IMR-90 (cell line): ENCODE measurements at regions of chr15 and their contacts with region 1.

Region 1: DNA sequence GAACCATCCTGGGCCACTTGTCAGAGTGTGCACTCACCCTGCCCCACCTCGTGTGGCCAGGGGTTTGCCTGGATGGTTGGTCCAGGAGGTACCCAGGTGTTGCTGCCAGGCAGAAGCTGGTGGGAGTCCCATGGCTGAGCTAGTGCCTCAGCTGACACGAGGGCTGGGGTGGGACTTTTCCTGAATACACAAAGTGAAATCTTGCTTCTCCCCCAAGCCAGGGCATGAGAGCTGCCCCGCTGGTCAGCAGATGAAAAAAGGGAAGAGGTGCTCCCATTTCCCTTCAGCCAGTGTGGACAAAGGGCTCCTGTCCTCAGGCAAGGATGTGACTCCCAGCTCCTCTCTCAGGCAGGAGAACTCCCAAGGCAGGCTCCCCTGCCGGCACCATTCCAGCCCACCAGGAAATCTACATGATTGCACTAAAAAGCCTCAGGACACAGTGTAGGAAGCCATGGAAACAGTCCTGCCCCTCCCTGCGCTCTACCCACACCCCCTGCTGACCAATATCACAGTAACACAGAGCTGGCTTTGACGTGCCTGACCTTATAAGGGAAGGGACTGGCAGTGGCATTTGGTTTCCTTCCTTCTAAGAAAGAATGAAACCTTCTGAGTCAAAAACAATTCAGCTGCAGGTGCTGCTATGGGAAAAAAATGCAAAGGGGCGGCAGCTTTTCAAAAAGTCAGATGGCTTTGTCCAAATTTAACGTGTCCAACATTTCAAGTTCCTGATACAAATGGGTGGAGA is 33.9 kb downstream of the MYO5C start:
- DNase-seq: peak; percentile 77
- ATAC-seq: peak; percentile 95
- H3K4me3 ChIP-seq: no peak overlapping the region
- H3K27ac ChIP-seq: peak overlapping the region; percentile 14; the same call in 1 of the 2 replicates
- H3K4me1 ChIP-seq: peaks cover 6% of the 10 kb centered on the region; the same call in 1 of the 2 replicates
- H3K27me3 ChIP-seq: peaks cover 10% of the 10 kb centered on the region
- CTCF ChIP-seq: no peak
- POLR2A ChIP-seq: no peak
- RAD21 ChIP-seq: 0 out of 2 replicates have a peak, but pooled peaks have one; percentile 13

Region 2: DNA sequence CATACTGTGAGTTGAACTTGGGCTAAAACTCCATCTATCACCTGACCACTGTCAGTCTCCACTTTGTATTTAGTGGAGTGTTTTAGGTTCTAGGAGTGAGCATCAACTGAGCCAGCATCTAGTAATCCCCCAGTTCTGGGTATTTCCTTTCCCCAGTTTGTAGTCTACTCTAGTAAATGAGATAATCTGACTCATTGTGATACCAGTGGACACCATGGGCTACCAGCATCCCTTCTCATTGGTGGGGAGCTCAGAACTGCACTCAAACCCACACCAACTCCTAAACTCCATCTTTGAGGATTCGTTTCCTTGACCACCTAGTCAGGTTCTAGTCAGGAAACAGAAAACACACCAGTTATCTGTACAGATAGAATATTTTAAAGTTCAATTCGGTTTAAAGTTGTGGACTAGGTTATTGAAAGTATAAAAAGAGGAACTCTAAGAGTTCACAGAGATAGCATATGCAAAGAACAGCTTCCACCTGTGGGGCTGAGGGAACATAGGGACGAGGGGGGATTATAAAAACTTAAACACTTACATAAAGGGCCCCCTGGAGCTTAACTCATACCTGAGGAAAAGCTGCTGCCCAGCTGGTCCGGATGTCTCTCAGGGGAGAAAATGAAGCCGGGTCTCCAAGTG is 326.1 kb before region 1 on chr15:
- CTCF ChIA-PET with region 1: no interaction called
- POLR2A ChIA-PET with region 1: no interaction called
- dilution Hi-C with region 1: no loop called
- in situ Hi-C with region 1: no loop called
- intact Hi-C with region 1: no loop called
- DNase-seq: peak; percentile 4
- ATAC-seq: no peak
- H3K4me3 ChIP-seq: no peak overlapping the region
- H3K27ac ChIP-seq: no peak overlapping the region
- H3K4me1 ChIP-seq: no peaks in the 10 kb centered on the region
- H3K27me3 ChIP-seq: no peaks in the 10 kb centered on the region
- CTCF ChIP-seq: no peak
- POLR2A ChIP-seq: no peak
- RAD21 ChIP-seq: no peak

Region 3: DNA sequence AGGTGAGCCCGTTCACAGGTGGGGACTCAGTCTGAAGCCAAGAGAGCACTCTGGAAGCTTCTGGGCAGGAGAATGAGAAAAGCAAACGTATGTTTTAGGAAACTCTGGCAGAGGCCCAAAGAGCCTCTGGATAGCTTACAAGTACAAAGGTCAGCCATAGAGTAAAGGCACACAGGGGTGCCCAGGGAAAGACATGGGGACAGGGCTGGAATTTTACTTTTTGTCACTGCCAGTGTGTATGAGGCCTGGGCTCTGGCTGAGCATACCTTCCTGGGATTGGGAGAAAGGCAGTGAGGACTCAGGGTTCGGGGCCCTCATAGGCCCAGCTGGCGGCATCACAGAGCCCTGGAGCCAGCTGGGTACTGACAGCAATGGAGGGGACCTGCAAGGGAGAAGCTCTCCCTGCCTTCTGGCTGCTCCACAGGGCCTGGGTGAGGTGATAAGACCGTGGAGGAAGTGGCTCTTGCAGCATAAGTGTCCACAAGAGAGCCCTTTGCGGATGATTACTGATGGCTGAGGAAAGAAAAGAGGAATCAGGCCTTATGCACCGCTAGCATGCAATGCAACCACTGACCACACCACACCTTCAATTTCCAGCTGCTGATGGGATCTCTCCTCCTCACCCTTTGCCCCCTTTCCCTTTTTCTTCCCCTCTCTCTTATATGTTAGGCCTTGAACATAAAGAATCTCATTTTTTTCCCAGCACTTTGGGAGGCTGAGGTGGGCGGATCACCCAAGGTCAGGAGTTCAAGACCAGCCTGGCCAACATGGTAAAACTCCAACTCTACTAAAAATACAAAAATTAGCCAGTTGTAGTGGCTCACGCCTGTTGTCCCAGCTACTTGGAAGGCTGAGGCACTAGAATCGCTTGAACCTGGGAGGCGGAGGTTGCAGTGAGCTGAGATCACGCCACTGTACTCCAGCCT is 124.0 kb before region 1 on chr15:
- CTCF ChIA-PET with region 1: no interaction called
- POLR2A ChIA-PET with region 1: no interaction called
- dilution Hi-C with region 1: no loop called
- in situ Hi-C with region 1: no loop called
- intact Hi-C with region 1: no loop called
- DNase-seq: no peak
- ATAC-seq: no peak
- H3K4me3 ChIP-seq: no peak overlapping the region
- H3K27ac ChIP-seq: no peak overlapping the region
- H3K4me1 ChIP-seq: peaks cover 18% of the 10 kb centered on the region
- H3K27me3 ChIP-seq: no peaks in the 10 kb centered on the region
- CTCF ChIP-seq: no peak
- POLR2A ChIP-seq: no peak
- RAD21 ChIP-seq: no peak

Region 4: DNA sequence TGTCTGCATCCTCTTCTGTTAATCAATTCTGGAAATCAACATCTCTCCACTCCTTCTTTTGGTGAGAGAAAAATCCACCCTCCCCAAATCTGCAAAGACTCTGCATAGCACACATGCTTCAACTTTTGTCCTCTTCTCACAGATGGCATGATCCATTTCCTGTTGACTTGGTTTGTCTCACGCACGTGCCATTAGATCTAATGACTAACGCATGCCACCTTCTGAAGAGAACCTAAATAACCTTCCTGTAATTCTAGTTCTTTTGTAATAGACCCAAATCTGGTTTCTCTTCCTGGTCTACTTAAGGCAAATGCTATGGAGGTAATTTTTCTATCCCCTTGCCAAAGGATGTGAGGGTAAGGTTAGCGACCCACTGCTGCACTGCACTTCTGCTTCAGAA is 468.5 kb after region 1 on chr15:
- CTCF ChIA-PET with region 1: interaction called, 3 read pairs
- POLR2A ChIA-PET with region 1: no interaction called
- dilution Hi-C with region 1: no loop called
- in situ Hi-C with region 1: loop called (anchors 5 kb)
- intact Hi-C with region 1: loop called (anchors 1 kb)
- DNase-seq: peak; percentile 8
- ATAC-seq: no peak; the same call in 1 of the 2 replicates
- H3K4me3 ChIP-seq: no peak overlapping the region
- H3K27ac ChIP-seq: no peak overlapping the region
- H3K4me1 ChIP-seq: no peaks in the 10 kb centered on the region
- H3K27me3 ChIP-seq: no peaks in the 10 kb centered on the region
- CTCF ChIP-seq: no peak
- POLR2A ChIP-seq: no peak
- RAD21 ChIP-seq: no peak